Dendritic cell treated with granulocyte-macrophage colony-stimulating factor and Interleukin-4, amounts not matched to agents 40 ng/mL and 50 ng/mL, for 4 days (primary cell): ENCODE measurements at regions of chr14 and their contacts with region 1.

Region 1: GRCh38 chr14:61296719-61297502 is 15.8 kb upstream of the TMEM30B start:
- H3K4me3 Mint-ChIP-seq: no peak overlapping the region
- H3K27ac Mint-ChIP-seq: no peak overlapping the region
- H3K4me1 Mint-ChIP-seq: no peaks in the 10 kb centered on the region
- H3K27me3 Mint-ChIP-seq: no peaks in the 10 kb centered on the region

Region 2: DNA sequence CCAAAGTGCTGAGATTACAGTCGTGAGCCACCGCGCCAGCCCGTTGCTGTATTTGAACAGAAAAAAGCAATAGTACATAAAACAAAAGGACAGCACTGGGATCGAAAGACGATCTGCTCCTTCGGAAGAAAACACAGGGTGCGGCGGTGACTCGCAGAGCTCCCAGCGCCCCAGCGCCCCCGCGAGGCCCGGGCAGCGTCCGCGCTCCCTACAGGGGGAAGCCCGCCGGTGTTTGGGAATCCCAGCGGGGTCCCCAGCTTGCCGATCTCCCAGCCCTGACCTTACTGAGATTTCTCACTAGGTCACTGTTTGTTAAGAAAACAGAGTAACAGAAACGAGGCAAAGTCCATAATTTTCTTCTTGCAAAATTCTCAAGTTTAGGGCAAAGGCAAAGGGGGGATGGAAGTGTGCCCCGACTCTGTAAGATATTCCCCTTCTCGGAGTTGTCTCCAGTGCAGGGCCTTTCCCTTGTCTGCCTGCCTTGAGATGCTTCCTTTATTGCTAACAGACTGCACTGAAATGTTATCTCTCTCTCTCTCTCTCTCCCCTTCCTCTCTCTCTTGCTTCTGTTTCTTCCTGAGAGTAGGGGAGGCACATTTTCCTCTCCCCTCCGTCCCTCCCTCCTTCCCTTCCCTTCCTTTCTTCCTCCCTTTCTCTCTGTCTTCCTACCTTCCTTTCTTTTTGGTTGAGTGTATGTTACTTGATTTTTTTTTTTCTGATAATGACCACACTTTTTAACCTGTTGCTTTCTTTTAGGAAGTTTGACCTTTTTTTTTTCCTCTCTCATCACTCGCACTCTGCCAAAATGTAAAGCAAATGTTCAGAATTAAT is 107.7 kb before region 1 on chr14:
- intact Hi-C with region 1: no loop called
- H3K4me3 Mint-ChIP-seq: peak overlapping the region; percentile 75
- H3K27ac Mint-ChIP-seq: peak overlapping the region; percentile 66
- H3K4me1 Mint-ChIP-seq: peaks cover 24% of the 10 kb centered on the region
- H3K27me3 Mint-ChIP-seq: peaks cover 76% of the 10 kb centered on the region

Region 3: DNA sequence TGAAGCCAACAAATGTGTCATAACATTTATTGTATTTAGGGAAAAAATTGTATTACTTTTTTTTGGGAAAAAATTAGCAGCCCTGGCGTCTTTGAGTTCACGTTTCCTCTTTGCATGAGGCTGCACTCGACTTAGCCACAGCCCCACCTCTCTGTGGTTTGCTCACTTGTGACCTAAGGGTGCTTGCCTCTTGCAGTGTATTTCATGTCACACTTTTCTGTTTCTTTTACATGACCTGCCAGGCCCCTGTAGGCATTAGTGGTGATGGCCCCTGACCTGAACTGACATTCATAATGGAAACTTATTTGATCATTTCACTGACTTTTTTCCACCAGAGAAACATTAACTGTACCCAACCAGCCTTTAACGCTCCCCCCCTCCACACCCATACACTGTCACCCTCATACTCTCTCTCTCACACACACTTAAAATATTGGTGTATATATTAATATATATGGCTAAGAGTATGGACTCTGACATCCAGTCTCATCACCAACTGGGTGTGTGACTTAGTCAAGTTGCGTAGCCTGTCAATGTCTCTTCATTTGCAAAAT is 147.4 kb after region 1 on chr14:
- intact Hi-C with region 1: loop called (anchors 5 kb)
- H3K4me3 Mint-ChIP-seq: no peak overlapping the region
- H3K27ac Mint-ChIP-seq: no peak overlapping the region
- H3K4me1 Mint-ChIP-seq: peaks cover 23% of the 10 kb centered on the region
- H3K27me3 Mint-ChIP-seq: no peaks in the 10 kb centered on the region

Region 4: GRCh38 chr14:61456720-61457119 is 159.8 kb after region 1 on chr14:
- intact Hi-C with region 1: loop called (anchors 1 kb)
- H3K4me3 Mint-ChIP-seq: no peak overlapping the region
- H3K27ac Mint-ChIP-seq: no peak overlapping the region
- H3K4me1 Mint-ChIP-seq: no peaks in the 10 kb centered on the region
- H3K27me3 Mint-ChIP-seq: no peaks in the 10 kb centered on the region